ENCODE measurements at regions of chr6 and their contacts with region 1.

Region 1: DNA sequence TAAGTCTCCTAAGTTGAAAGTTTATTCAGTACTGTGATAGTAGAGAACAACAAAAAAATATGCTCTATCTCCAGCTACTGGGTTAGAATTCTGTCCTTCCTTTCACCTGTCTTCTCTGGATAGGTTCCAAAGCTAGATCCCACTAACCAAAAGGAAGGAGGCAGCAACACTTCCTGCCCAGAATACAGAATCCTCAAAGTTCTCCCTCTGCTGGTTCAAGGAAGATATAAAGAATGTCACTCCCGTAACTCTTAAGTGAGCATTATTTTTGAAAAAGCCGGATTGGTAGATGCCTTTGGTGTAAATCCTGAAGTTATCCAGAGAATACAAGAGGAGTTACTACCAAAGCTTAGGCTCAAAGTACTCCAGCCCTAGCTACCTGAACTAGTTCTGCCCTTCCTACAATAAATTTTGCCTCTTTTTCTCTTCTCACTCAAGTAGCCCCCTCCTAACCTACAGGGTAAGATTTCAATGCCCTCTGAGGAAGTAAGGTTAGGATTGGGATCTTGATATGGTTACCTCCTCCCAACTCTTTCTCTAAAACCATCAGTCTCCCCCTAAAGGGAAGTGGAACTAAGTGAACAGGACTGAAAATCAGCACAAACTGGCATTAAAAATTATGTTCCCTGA is 26.0 kb upstream of the CRIP3 start:
- DNase-seq: peak in 1 of 2 experiments; percentile 21
- H3K4me3 ChIP-seq: no peak overlapping the region
- H3K27ac ChIP-seq: no peak overlapping the region
- H3K4me1 ChIP-seq: no peaks in the 10 kb centered on the region; a peak in 1 of 7 replicates
- H3K27me3 ChIP-seq: no peaks in the 10 kb centered on the region
- CTCF ChIP-seq: peak in 2 of 3 experiments; percentile 68 to 74; a peak in 3 of 4 replicates
- EP300 ChIP-seq: no peak
- POLR2A ChIP-seq: no peak
- RAD21 ChIP-seq: peak; percentile 70 to 76

Region 2: DNA sequence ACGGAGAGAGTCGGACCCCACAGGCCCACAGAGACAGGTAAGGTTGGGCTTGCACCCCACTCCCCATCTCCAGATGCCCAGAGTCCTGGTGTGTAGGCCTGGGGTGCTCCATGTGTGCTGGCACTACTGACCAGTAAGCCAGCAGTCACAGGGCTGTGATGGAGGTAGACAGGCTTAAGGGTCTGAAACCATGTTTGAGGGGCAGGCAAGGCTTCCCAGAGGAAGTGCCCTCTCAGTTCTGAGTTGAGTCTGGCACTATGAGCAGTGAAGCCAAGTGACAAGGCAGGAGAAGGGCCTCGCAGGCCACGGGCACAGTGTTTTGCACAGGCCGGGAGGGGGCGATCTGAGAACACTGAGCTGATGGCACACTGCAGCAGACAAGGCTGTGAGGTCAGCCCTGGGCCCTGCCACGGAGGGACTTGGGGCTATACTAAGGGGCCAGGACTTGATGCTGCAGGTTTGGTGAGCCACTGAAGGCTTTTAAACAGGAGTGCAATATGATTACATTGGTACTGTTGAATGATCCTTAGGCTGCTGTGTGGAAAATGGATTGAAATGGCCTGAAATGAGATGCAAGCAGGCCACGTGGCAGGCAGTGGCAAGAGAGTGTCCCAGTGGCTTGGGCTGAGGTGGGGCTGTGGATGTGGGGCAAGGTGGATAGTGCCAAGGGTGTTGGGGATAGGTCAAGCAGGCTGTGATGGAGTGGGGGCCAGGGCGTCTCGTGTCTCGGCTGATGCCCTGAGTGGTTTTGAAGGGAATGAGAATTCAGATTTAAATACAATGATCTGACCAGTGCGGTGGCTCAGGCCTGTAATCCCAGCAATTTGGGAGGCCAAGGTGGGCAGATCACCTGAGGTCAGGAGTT is 71.0 kb before region 1 on chr6:
- CTCF ChIA-PET with region 1: interaction called, 78 read pairs
- POLR2A ChIA-PET with region 1: no interaction called
- DNase-seq: peak; percentile 49 to 90
- H3K4me3 ChIP-seq: no peak overlapping the region
- H3K27ac ChIP-seq: no peak overlapping the region
- H3K4me1 ChIP-seq: peaks cover 0 to 15% (median 5%) of the 10 kb centered on the region in 4 experiments; a peak in 6 of 7 replicates
- H3K27me3 ChIP-seq: peaks cover 2 to 9% (median 7%) of the 10 kb centered on the region in 4 experiments
- CTCF ChIP-seq: peak in 2 of 3 experiments; percentile 91 to 98; a peak in 3 of 4 replicates
- EP300 ChIP-seq: no peak
- POLR2A ChIP-seq: no peak
- RAD21 ChIP-seq: peak; percentile 96 to 97

Region 3: DNA sequence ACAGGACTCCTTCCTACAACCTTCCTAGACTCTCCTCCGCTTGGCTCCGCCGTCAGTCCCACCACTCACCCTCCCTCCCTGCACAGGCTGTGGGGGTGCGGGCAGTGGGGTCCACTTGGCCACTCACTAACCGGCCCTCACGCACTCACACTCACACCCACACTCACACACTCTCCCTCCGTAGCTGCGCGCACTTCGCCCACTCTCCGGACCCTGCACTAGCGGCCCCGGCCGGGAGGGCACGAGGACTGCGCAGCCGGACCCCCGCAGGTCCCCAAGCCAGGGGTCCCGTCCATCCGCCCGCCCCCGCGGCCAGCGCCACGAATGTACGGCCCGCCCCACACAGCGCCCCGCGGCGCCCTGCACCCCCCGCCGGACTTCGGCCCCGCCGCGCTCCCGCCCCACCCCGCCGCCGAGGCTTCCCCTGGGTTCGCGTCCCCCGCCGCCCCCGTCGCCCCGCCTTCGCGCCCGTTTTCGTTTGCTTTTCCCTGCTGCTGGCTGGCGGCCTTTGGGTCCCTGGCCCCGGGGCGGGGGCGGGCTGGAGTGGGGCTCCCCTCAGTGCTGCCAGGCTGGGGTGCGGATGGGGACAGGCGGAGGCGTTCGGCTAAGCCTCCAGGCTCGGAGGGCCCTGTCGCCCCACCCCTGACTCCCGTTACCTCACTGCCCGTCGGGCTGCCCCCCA is 59.5 kb before region 1 on chr6:
- CTCF ChIA-PET with region 1: interaction called, 11 read pairs
- POLR2A ChIA-PET with region 1: no interaction called
- DNase-seq: no peak
- H3K4me3 ChIP-seq: peak overlapping the region; percentile 28 to 66 (median 46)
- H3K27ac ChIP-seq: no peak overlapping the region
- H3K4me1 ChIP-seq: peaks cover 4 to 34% (median 26%) of the 10 kb centered on the region in 4 experiments
- H3K27me3 ChIP-seq: peaks cover 12 to 48% (median 37%) of the 10 kb centered on the region in 4 experiments
- CTCF ChIP-seq: no peak
- EP300 ChIP-seq: no peak
- POLR2A ChIP-seq: no peak
- RAD21 ChIP-seq: no peak

Region 4: GRCh38 chr6:43297644-43298564 is 36.7 kb before region 1 on chr6 and contains the start of gene SLC22A7:
- CTCF ChIA-PET with region 1: interaction called, 10 read pairs
- POLR2A ChIA-PET with region 1: no interaction called
- DNase-seq: no peak
- H3K4me3 ChIP-seq: no peak within 1 kb of the TSS
- H3K27ac ChIP-seq: no peak within 1 kb of the TSS
- H3K4me1 ChIP-seq: no peaks in the 10 kb centered on the region
- H3K27me3 ChIP-seq: peaks cover 0 to 2% (median 0%) of the 10 kb centered on the region in 4 experiments; a peak in 1 of 7 replicates
- CTCF ChIP-seq: no peak
- EP300 ChIP-seq: no peak
- POLR2A ChIP-seq: no peak
- RAD21 ChIP-seq: no peak
- total RNA-seq, gene SLC22A7: not detected in 2 replicates

Region 5: GRCh38 chr6:43308101-43308989 is 26.2 kb before region 1 on chr6 and contains the start of gene CRIP3:
- CTCF ChIA-PET with region 1: interaction called, 21 read pairs
- POLR2A ChIA-PET with region 1: no interaction called
- DNase-seq: peak; percentile 60 to 86
- H3K4me3 ChIP-seq: peak within 1 kb of the TSS; percentile 51 to 74 (median 66)
- H3K27ac ChIP-seq: no peak within 1 kb of the TSS
- H3K4me1 ChIP-seq: peaks cover 9 to 15% (median 9%) of the 10 kb centered on the region in 4 experiments
- H3K27me3 ChIP-seq: 0 out of 7 replicates have a peak, but pooled peaks cover 0 to 2% (median 0%) of the 10 kb centered on the region in 4 experiments
- CTCF ChIP-seq: peak in 2 of 3 experiments; percentile 51 to 76; a peak in 2 of 4 replicates
- EP300 ChIP-seq: no peak
- POLR2A ChIP-seq: peak in 1 of 2 experiments; percentile 57; a peak in 2 of 3 replicates
- RAD21 ChIP-seq: peak; percentile 31 to 48; a peak in 3 of 4 replicates
- total RNA-seq, gene CRIP3: 37.6 and 46.3 TPM in 2 replicates

Region 6: GRCh38 chr6:43318011-43318410 is 16.6 kb before region 1 on chr6:
- CTCF ChIA-PET with region 1: interaction called, 16 read pairs
- POLR2A ChIA-PET with region 1: interaction called, 3 read pairs
- DNase-seq: no peak
- H3K4me3 ChIP-seq: no peak overlapping the region
- H3K27ac ChIP-seq: no peak overlapping the region
- H3K4me1 ChIP-seq: peaks cover 0 to 3% (median 0%) of the 10 kb centered on the region in 4 experiments; a peak in 3 of 7 replicates
- H3K27me3 ChIP-seq: no peaks in the 10 kb centered on the region
- CTCF ChIP-seq: no peak
- EP300 ChIP-seq: no peak
- POLR2A ChIP-seq: no peak
- RAD21 ChIP-seq: no peak

Measured in H1 (cell line).